Heart right ventricle (tissue), 16 donors: ENCODE measurements at regions of chr17 and their contacts with region 1.

Region 1: DNA sequence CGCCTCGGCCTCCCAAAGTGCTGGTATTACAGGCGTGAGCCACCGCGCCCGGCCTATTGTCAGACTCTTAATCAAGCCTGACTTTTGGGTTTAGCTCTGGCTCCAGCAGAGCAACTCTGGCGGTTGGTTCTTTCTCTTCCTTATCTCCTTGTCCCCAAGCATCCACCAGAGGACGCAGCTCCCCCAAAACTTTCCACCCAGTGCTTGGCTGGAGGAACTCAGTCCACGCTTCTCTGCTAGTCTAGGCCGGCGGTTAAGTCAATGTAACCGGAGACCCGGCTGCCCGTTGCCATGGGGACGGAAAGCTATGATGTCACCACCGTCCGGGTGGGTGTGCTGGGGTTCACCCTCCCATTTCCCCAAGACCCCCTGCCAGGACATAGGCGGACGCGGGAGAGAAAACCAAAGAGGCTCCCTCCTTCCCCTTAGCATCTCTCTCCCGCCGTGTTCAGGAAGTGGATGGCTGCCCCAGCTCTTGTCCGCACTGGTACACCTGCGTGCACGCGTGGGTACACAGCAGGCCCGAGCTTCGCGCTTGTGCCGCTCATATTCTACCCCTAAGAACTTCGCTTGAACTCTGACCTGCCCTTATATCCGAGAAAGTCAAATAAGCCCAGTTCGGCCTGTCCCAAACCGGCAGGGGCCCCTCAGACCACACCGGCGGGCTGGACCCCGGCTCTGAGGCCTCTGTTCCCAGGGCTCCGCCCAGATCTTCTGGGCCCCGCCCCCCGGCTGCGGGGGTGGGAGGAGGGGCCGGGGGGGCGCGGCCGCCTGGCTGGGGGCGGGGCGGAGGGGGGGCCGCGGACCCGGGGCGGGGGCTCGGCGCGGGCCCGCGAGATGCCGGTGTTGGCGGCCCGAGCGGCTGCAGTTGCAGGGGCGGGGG is at the start of gene RND2:
- DNase-seq: peak; percentile 77 to 91
- ATAC-seq: peak; percentile 58 to 81 (median 70)
- H3K4me3 ChIP-seq: peak within 1 kb of the TSS; percentile 25 to 80 (median 60)
- H3K27ac ChIP-seq: peak within 1 kb of the TSS in 8 of 10 donors; percentile 7 to 79 (median 54)
- H3K4me1 ChIP-seq: peaks cover 3 to 38% (median 27%) of the 10 kb centered on the region in 9 donors
- H3K27me3 ChIP-seq: no peaks in the 10 kb centered on the region
- CTCF ChIP-seq: peak; percentile 28 to 84 (median 69)
- total RNA-seq, gene RND2: 0.16 to 2.3 (median 0.51) TPM

Region 2: GRCh38 chr17:42937712-42938596 is 86.7 kb before region 1 on chr17:
- intact Hi-C with region 1: no loop called
- DNase-seq: peak in 1 of 2 donors; percentile 23
- ATAC-seq: peak; percentile 59 to 80 (median 76)
- H3K4me3 ChIP-seq: no peak overlapping the region
- H3K27ac ChIP-seq: no peak overlapping the region
- H3K4me1 ChIP-seq: peaks cover 0 to 3% (median 0%) of the 10 kb centered on the region in 9 donors
- H3K27me3 ChIP-seq: peaks cover 0 to 4% (median 0%) of the 10 kb centered on the region in 7 donors
- CTCF ChIP-seq: peak; percentile 41 to 80 (median 69)

Region 3: DNA sequence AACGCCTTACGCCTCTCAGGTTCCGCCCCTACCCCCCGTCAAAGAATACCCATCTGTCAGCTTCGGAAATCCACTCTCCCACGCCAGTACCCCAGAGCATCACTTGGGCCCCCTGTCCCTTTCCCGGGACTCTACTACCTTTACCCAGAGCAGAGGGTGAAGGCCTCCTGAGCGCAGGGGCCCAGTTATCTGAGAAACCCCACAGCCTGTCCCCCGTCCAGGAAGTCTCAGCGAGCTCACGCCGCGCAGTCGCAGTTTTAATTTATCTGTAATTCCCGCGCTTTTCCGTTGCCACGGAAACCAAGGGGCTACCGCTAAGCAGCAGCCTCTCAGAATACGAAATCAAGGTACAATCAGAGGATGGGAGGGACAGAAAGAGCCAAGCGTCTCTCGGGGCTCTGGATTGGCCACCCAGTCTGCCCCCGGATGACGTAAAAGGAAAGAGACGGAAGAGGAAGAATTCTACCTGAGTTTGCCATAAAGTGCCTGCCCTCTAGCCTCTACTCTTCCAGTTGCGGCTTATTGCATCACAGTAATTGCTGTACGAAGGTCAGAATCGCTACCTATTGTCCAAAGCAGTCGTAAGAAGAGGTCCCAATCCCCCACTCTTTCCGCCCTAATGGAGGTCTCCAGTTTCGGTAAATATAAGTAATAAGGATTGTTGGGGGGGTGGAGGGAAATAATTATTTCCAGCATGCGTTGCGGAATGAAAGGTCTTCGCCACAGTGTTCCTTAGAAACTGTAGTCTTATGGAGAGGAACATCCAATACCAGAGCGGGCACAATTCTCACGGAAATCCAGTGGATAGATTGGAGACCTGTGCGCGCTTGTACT is 100.7 kb after region 1 on chr17 and contains the start of gene BRCA1:
- intact Hi-C with region 1: loop called in 5 of 10 experiments (anchors 10 kb)
- DNase-seq: peak; percentile 78 to 94
- ATAC-seq: peak; percentile 95 to 100 (median 100)
- H3K4me3 ChIP-seq: peak within 1 kb of the TSS; percentile 36 to 79 (median 65)
- H3K27ac ChIP-seq: peak within 1 kb of the TSS in 9 of 10 donors; percentile 63 to 89 (median 79)
- H3K4me1 ChIP-seq: peaks cover 3 to 42% (median 28%) of the 10 kb centered on the region in 9 donors
- H3K27me3 ChIP-seq: no peaks in the 10 kb centered on the region
- CTCF ChIP-seq: no peak
- total RNA-seq, gene BRCA1: 4.1 to 12.0 (median 8.2) TPM

Region 4: GRCh38 chr17:43316522-43317142 is 292.0 kb after region 1 on chr17:
- intact Hi-C with region 1: loop called in 1 of 10 experiments (anchors 10 kb)
- DNase-seq: no peak
- ATAC-seq: no peak
- H3K4me3 ChIP-seq: no peak overlapping the region
- H3K27ac ChIP-seq: no peak overlapping the region
- H3K4me1 ChIP-seq: no peaks in the 10 kb centered on the region
- H3K27me3 ChIP-seq: no peaks in the 10 kb centered on the region
- CTCF ChIP-seq: no peak

Region 5: DNA sequence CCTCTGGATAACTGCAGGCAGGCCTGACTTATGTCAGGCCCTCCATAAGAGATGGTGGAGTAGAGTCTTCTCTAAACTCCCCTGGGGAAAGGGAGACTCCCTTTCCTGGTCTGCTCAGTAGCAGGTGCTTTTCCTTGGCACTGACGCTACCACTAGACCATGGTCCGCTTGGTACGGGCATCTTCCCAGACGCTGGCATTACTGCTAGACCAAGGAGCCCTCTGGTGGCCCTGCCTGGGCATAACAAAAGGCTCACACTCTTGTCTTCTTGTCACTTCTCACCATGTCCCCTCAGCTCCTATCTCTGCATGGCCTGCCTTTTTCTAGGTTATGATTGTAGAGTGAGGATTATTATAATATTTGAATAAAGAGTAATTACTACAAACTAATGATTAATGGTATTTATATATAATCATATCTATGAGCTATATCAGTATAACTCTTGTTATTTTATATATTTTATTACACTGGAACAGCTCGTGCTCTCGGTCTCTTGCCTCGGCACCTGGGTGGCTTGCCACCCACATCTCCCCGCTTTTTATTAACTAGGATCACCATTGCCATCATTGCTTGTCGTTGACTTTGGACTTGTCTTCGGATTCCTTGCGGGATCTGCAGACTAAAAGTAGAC is 314.4 kb after region 1 on chr17:
- intact Hi-C with region 1: loop called in 3 of 10 experiments (anchors 5 to 10 kb)
- DNase-seq: peak; percentile 70
- ATAC-seq: no peak
- H3K4me3 ChIP-seq: no peak overlapping the region
- H3K27ac ChIP-seq: no peak overlapping the region
- H3K4me1 ChIP-seq: peaks cover 0 to 44% (median 27%) of the 10 kb centered on the region in 9 donors
- H3K27me3 ChIP-seq: no peaks in the 10 kb centered on the region
- CTCF ChIP-seq: peak; percentile 50 to 88 (median 72)